Heart left ventricle (tissue), 16 donors: ENCODE measurements at regions of chr1 and their contacts with region 1.

Region 1: GRCh38 chr1:156129706-156130581 is 15.4 kb downstream of the LMNA start:
- DNase-seq: peak; percentile 83 to 92 (median 86)
- ATAC-seq: peak; percentile 63 to 69 (median 64)
- H3K4me3 ChIP-seq: peak overlapping the region in 10 of 12 donors; percentile 7 to 40 (median 30)
- H3K27ac ChIP-seq: peak overlapping the region; percentile 95 to 100 (median 98)
- H3K4me1 ChIP-seq: peaks cover 42 to 69% (median 62%) of the 10 kb centered on the region in 12 donors
- H3K27me3 ChIP-seq: no peaks in the 10 kb centered on the region
- CTCF ChIP-seq: peak; percentile 92 to 99 (median 99)
- POLR2A ChIP-seq: peak in 1 of 2 donors; percentile 40

Region 2: GRCh38 chr1:155961937-155962336 is 168.0 kb before region 1 on chr1:
- intact Hi-C with region 1: no loop called
- DNase-seq: peak; percentile 61 to 87 (median 72)
- ATAC-seq: peak; percentile 50 to 81 (median 72)
- H3K4me3 ChIP-seq: peak overlapping the region in 1 of 12 donors; percentile 5
- H3K27ac ChIP-seq: peak overlapping the region in 11 of 12 donors; percentile 58 to 89 (median 71)
- H3K4me1 ChIP-seq: peaks cover 18 to 70% (median 45%) of the 10 kb centered on the region in 12 donors
- H3K27me3 ChIP-seq: no peaks in the 10 kb centered on the region
- CTCF ChIP-seq: peak in 10 of 12 donors; percentile 20 to 54 (median 36)
- POLR2A ChIP-seq: no peak

Region 3: DNA sequence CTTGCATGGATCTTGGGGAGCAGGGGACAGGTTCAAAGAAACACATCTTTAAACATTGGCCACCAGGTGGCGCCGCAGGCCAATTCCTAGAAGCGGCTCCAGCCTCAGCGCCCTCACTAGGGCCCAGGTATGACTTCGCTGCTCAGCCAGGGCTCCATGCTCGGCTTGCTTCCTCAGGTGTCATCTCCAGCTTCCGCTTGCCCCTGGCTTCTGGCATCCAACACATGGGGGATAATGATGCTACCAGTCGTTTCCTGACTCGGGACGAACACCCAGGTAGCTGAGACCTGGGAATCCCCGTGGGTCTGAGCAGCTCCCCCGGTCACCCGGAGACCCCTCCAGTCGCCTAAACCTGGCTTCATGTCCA is 39.1 kb before region 1 on chr1:
- intact Hi-C with region 1: loop called (anchors 1 to 2 kb)
- DNase-seq: peak; percentile 78 to 92 (median 84)
- ATAC-seq: peak; percentile 65 to 84 (median 80)
- H3K4me3 ChIP-seq: no peak overlapping the region
- H3K27ac ChIP-seq: peak overlapping the region in 2 of 12 donors; percentile 32 to 75
- H3K4me1 ChIP-seq: peaks cover 0 to 29% (median 9%) of the 10 kb centered on the region in 12 donors
- H3K27me3 ChIP-seq: no peaks in the 10 kb centered on the region
- CTCF ChIP-seq: peak; percentile 74 to 94 (median 89)
- POLR2A ChIP-seq: no peak

Region 4: GRCh38 chr1:156096640-156097391 is 33.1 kb before region 1 on chr1:
- intact Hi-C with region 1: loop called (anchors 1 to 2 kb)
- DNase-seq: peak; percentile 91 to 95 (median 91)
- ATAC-seq: peak; percentile 91 to 96 (median 95)
- H3K4me3 ChIP-seq: peak overlapping the region in 3 of 12 donors; percentile 16 to 27 (median 27)
- H3K27ac ChIP-seq: peak overlapping the region; percentile 51 to 92 (median 86)
- H3K4me1 ChIP-seq: peaks cover 0 to 46% (median 28%) of the 10 kb centered on the region in 12 donors
- H3K27me3 ChIP-seq: no peaks in the 10 kb centered on the region
- CTCF ChIP-seq: peak; percentile 89 to 99 (median 97)
- POLR2A ChIP-seq: no peak

Region 5: DNA sequence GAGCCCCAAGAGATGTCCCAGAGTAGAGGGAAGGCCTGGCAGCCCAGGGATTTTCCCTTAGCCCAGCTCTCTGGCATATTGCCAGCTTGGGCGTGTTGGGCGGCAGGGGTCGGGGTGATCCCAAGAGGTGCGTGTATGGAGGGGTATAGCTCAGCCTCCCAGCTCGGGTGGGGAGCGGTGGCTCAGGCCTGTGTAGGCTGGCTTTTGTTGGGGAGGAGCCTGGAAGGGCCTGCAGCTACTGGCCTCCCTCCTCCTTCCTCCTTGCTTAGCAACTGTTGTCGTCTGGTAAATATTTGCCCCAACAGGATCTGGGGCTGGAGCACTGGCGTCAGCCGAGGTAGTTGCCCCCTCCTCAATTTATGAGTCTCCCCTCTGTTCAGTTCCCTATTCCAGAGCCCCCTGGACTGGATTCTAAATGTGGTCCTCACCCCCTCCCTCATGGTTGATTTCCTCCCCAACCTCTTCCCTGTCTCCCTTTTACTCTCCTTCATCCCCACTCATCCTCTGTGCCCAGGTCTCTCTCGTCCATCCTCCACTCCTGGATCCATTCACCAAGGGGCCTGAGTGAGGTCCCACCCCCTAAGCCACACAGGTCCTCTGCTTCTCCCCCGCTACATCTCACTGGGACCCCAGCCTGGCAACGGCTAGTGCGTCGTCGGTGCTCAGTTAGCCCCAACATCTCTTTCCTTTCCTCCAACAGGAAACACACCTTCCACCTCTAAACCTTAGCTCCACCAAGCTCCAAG is 25.7 kb before region 1 on chr1:
- intact Hi-C with region 1: loop called in 2 of 10 experiments (anchors 2 kb)
- DNase-seq: peak; percentile 78 to 87 (median 83)
- ATAC-seq: peak; percentile 63 to 74 (median 69)
- H3K4me3 ChIP-seq: peak overlapping the region in 4 of 12 donors; percentile 10 to 32 (median 26)
- H3K27ac ChIP-seq: peak overlapping the region; percentile 91 to 99 (median 96)
- H3K4me1 ChIP-seq: peaks cover 24 to 89% (median 62%) of the 10 kb centered on the region in 12 donors
- H3K27me3 ChIP-seq: no peaks in the 10 kb centered on the region
- CTCF ChIP-seq: no peak
- POLR2A ChIP-seq: no peak